Head of caudate nucleus (tissue), 42 donors: ENCODE measurements at regions of chr9 and their contacts with region 1.

Region 1: GRCh38 chr9:385818-386398 is 171.2 kb downstream of the DOCK8 start:
- DNase-seq: peak in 39 of 42 donors; percentile 14 to 84 (median 64)

Region 2: DNA sequence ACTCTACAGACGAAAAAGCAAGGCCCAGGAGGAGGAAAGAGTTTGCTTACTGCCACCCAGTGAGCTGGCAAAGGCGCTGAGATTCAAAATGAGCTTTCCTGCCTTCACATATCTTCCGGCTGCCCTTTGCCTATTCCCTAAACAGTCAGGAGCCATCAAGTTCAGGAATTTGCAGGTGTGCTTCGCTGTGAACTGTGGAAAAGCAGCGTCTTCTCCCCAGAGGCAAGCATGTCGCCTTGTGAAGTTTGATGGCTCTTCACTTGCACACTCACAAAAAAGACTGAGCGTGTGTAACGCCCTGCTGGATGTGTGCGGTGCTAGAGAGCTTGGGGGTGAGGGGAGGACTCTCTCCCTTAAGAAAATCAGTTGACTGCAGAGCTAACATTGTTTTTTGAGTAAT is 117.4 kb after region 1 on chr9:
- intact Hi-C with region 1: no loop called
- DNase-seq: no peak

Region 3: GRCh38 chr9:546797-547223 is 160.9 kb after region 1 on chr9:
- intact Hi-C with region 1: loop called (anchors 10 kb)
- DNase-seq: peak in 26 of 42 donors; percentile 17 to 81 (median 48)

Region 4: GRCh38 chr9:806285-807156 is 420.6 kb after region 1 on chr9:
- intact Hi-C with region 1: loop called (anchors 10 kb)
- DNase-seq: peak in 4 of 42 donors; percentile 9 to 53 (median 31)

Region 5: GRCh38 chr9:1009101-1009707 is 623.3 kb after region 1 on chr9:
- intact Hi-C with region 1: loop called (anchors 10 kb)
- DNase-seq: peak; percentile 38 to 94 (median 85)